B cell (primary cell): ENCODE measurements at regions of chr6 and their contacts with region 1.

Region 1: GRCh38 chr6:26103770-26104456 is 16.7 kb downstream of the HFE start:
- DNase-seq: peak; percentile 98
- ATAC-seq: peak; percentile 87
- H3K4me3 ChIP-seq: peak overlapping the region; percentile 52 to 81 (median 62)
- H3K4me3 Mint-ChIP-seq: peak overlapping the region; percentile 88
- H3K27ac ChIP-seq: peak overlapping the region; percentile 78 to 79
- H3K27ac Mint-ChIP-seq: peak overlapping the region; percentile 99
- H3K4me1 ChIP-seq: peaks cover 5 to 15% of the 10 kb centered on the region in 2 donors
- H3K4me1 Mint-ChIP-seq: peaks cover 15% of the 10 kb centered on the region
- H3K27me3 ChIP-seq: no peaks in the 10 kb centered on the region
- H3K27me3 Mint-ChIP-seq: no peaks in the 10 kb centered on the region
- CTCF ChIP-seq: peak; percentile 66

Region 2: GRCh38 chr6:26045065-26045927 is 58.6 kb before region 1 on chr6:
- CTCF ChIA-PET with region 1: interaction called, 3 read pairs
- POLR2A ChIA-PET with region 1: interaction called, 32 read pairs
- intact Hi-C with region 1: loop called (anchors 1 kb)
- DNase-seq: peak; percentile 90
- ATAC-seq: peak; percentile 58
- H3K4me3 ChIP-seq: peak overlapping the region; percentile 56 to 98 (median 69)
- H3K4me3 Mint-ChIP-seq: peak overlapping the region; percentile 87
- H3K27ac ChIP-seq: peak overlapping the region; percentile 85 to 89
- H3K27ac Mint-ChIP-seq: peak overlapping the region; percentile 99
- H3K4me1 ChIP-seq: peaks cover 14 to 29% of the 10 kb centered on the region in 2 donors
- H3K4me1 Mint-ChIP-seq: peaks cover 17% of the 10 kb centered on the region
- H3K27me3 ChIP-seq: no peaks in the 10 kb centered on the region
- H3K27me3 Mint-ChIP-seq: no peaks in the 10 kb centered on the region
- CTCF ChIP-seq: no peak

Region 3: DNA sequence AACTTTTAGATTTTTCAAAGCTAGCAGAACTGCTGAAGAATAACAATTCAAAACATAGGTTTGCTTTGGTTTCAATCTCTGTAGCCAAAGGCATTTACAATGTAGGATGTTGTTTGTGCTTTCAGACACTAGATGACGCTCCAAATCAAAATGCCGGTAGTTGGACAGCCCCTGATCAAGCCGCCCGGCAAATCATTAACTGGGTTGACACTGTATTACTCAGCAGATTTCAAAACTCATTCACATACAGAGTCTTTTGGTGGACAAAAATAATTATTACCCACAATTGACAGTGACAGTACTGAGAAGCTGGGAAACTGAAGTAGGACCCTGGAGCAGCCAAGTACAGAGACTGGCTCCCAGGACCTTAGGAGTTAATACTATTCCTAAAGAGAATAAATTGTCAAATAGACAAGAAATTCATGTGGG is 37.9 kb before region 1 on chr6:
- CTCF ChIA-PET with region 1: interaction called, 605 read pairs
- POLR2A ChIA-PET with region 1: interaction called, 6 read pairs
- intact Hi-C with region 1: no loop called
- DNase-seq: peak; percentile 83
- ATAC-seq: peak; percentile 88
- H3K4me3 ChIP-seq: no peak overlapping the region
- H3K4me3 Mint-ChIP-seq: no peak overlapping the region
- H3K27ac ChIP-seq: no peak overlapping the region
- H3K27ac Mint-ChIP-seq: no peak overlapping the region
- H3K4me1 ChIP-seq: peaks cover 0 to 4% of the 10 kb centered on the region in 2 donors
- H3K4me1 Mint-ChIP-seq: peaks cover 7% of the 10 kb centered on the region
- H3K27me3 ChIP-seq: peaks cover 0 to 2% (median 0%) of the 10 kb centered on the region in 4 experiments
- H3K27me3 Mint-ChIP-seq: no peaks in the 10 kb centered on the region
- CTCF ChIP-seq: peak; percentile 90

Region 4: GRCh38 chr6:26223228-26223627 is 119.3 kb after region 1 on chr6:
- CTCF ChIA-PET with region 1: no interaction called
- POLR2A ChIA-PET with region 1: no interaction called
- intact Hi-C with region 1: no loop called
- DNase-seq: no peak
- ATAC-seq: peak; percentile 15
- H3K4me3 ChIP-seq: peak overlapping the region; percentile 56 to 97 (median 75)
- H3K4me3 Mint-ChIP-seq: no peak overlapping the region
- H3K27ac ChIP-seq: peak overlapping the region; percentile 56 to 95
- H3K27ac Mint-ChIP-seq: no peak overlapping the region
- H3K4me1 ChIP-seq: peaks cover 4 to 14% of the 10 kb centered on the region in 2 donors
- H3K4me1 Mint-ChIP-seq: peaks cover 8% of the 10 kb centered on the region
- H3K27me3 ChIP-seq: no peaks in the 10 kb centered on the region
- H3K27me3 Mint-ChIP-seq: no peaks in the 10 kb centered on the region
- CTCF ChIP-seq: no peak

Region 5: DNA sequence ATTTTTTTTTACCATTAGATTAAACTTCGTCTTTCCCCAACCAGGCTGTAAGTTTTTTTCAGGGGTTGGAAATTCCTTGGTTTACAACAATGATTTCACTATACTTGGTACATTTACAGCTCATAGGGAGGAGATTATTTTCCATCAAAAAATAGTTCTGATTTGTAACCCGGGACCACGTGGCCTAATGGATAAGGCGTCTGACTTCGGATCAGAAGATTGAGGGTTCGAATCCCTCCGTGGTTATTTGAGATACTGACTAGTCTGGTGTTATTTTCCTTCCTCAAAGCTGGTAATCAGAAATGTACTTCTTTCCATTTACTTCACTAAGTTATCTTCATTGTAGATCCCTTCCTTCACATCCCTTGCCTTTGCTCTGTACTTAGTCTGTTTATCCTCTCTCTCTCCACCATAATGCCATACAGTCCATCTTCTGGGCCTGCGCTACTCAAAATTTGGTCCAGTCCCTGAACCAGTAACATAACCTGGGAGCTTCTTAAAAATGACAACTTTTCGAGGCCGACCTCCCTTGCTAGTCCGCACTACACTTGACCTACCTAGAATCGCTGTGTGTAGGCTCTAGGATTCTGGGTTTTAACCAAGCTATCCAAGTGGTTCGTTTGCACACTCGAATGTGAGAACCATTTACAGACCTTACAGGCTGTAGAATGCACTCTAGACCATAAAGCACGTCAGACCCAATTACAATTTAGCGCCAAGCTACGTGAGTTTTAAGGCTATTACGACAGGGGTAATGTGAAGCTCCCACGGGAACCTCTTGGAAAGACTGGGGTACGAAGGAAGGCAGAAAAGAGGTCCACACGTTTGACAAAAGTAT is 219.0 kb after region 1 on chr6:
- CTCF ChIA-PET with region 1: no interaction called
- POLR2A ChIA-PET with region 1: no interaction called
- intact Hi-C with region 1: no loop called
- DNase-seq: peak; percentile 83
- ATAC-seq: peak; percentile 59
- H3K4me3 ChIP-seq: peak overlapping the region in 4 of 5 experiments; percentile 49 to 74 (median 59)
- H3K4me3 Mint-ChIP-seq: peak overlapping the region; percentile 74
- H3K27ac ChIP-seq: no peak overlapping the region
- H3K27ac Mint-ChIP-seq: peak overlapping the region; percentile 70
- H3K4me1 ChIP-seq: peaks cover 14 to 31% of the 10 kb centered on the region in 2 donors
- H3K4me1 Mint-ChIP-seq: peaks cover 22% of the 10 kb centered on the region
- H3K27me3 ChIP-seq: peaks cover 0 to 43% (median 25%) of the 10 kb centered on the region in 4 experiments
- H3K27me3 Mint-ChIP-seq: peaks cover 26% of the 10 kb centered on the region
- CTCF ChIP-seq: no peak

Region 6: GRCh38 chr6:26411751-26412150 is 307.8 kb after region 1 on chr6:
- CTCF ChIA-PET with region 1: no interaction called
- POLR2A ChIA-PET with region 1: no interaction called
- intact Hi-C with region 1: no loop called
- DNase-seq: no peak
- ATAC-seq: no peak
- H3K4me3 ChIP-seq: no peak overlapping the region
- H3K4me3 Mint-ChIP-seq: no peak overlapping the region
- H3K27ac ChIP-seq: no peak overlapping the region
- H3K27ac Mint-ChIP-seq: peak overlapping the region; percentile 2
- H3K4me1 ChIP-seq: peaks cover 12 to 20% of the 10 kb centered on the region in 2 donors
- H3K4me1 Mint-ChIP-seq: peaks cover 39% of the 10 kb centered on the region
- H3K27me3 ChIP-seq: no peaks in the 10 kb centered on the region
- H3K27me3 Mint-ChIP-seq: no peaks in the 10 kb centered on the region
- CTCF ChIP-seq: no peak